Activated T-helper 1 cell treated with anti-CD3 and anti-CD28 coated beads, Interleukin-12 subunit alpha, Interleukin-12 subunit beta, Interleukin-2, Interleukin-4 antibody, amounts not matched to agents 30 ng/mL and 10 ng/mL and 1 ng/mL, durations not matched to agents 14 hours and 24 hours and 36 hours (primary cell): ENCODE measurements at regions of chr5 and their contacts with region 1.

Region 1: DNA sequence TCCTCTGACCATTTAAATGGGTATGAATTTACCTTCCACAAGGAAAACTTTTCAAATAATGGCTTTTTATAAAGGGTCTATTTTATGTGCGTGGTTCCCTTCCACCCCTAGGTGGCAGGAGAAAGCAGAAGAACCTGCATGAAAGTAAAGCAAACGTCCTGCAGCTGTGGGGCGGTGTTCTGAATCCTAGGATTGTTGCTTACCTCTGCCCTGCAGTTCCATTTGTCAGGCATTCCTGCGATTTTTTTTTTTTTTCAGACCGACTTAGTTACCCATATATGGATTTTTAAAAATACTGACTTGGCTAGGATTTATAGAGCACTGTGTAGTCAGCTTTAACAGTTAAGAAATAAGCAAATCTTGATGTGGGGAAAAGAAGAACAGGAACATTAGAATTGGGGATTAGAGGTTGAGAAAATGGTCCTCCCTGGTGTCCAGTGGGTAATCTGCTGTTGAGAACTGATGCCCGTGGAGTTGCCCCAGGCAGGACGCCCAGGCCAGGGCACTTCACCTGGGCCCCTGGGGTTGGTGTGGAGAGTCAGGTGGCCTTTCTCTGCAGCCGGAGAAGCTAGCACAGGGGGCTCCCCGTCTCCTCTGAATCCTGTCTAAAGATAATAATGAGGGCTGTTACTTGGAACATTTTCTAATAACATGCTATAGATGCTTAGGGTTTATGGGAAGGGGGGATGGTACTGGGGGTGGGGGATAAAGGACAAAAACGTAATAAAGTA is 30.4 kb upstream of the LTC4S start:
- DNase-seq: peak; percentile 11
- H3K4me3 Mint-ChIP-seq: no peak overlapping the region
- H3K27ac Mint-ChIP-seq: no peak overlapping the region
- H3K4me1 Mint-ChIP-seq: peaks cover 51% of the 10 kb centered on the region
- H3K27me3 Mint-ChIP-seq: no peaks in the 10 kb centered on the region

Region 2: GRCh38 chr5:179795863-179796833 is 32.8 kb after region 1 on chr5:
- intact Hi-C with region 1: loop called (anchors 1 kb)
- DNase-seq: peak; percentile 63
- H3K4me3 Mint-ChIP-seq: peak overlapping the region; percentile 67
- H3K27ac Mint-ChIP-seq: peak overlapping the region; percentile 40
- H3K4me1 Mint-ChIP-seq: peaks cover 8% of the 10 kb centered on the region
- H3K27me3 Mint-ChIP-seq: no peaks in the 10 kb centered on the region

Region 3: DNA sequence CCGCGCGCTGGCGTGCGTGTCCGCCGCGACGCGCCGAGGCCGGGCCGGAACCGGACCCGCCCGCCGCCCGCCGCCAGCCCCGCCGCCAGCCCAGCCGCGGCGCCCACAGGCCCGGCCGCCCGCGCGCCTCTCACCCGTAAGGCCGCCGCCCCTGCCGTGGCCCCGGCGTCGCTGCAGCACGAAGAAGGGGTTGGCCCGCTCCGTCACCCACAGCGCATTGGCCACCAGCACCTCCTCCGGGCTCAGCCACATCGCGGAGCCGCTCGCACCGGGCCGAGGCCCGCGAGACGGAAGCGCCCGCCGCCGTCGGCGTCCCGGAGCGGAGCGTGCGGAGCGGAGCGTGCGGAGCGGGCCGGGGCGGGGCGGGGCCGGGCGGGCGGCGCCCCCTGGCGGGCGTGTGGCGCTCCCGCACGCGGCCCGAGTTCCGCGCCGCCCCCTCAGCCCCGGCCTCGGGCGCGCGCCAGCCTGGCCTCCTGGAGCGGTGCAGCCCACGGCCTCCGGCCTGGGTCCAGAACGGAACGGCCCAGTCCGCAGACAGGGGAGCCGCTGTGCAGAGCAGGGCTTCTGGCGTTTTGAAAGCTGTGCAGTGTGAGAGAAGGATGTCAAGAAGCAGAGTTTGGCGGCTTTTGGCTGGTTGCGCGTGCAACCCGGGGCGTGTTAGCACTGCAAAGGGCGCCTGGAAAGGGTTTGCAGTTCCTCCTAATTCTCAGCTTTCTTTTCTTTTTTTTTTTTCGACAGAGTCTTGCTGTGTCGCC is 144.4 kb after region 1 on chr5 and contains the start of gene TBC1D9B:
- intact Hi-C with region 1: loop called (anchors 1 kb)
- DNase-seq: peak; percentile 69
- H3K4me3 Mint-ChIP-seq: peak within 1 kb of the TSS; percentile 95
- H3K27ac Mint-ChIP-seq: peak within 1 kb of the TSS; percentile 89
- H3K4me1 Mint-ChIP-seq: peaks cover 18% of the 10 kb centered on the region
- H3K27me3 Mint-ChIP-seq: peaks cover 2% of the 10 kb centered on the region
- total RNA-seq, gene TBC1D9B: 123 and 127 TPM in 2 replicates

Region 4: GRCh38 chr5:180090098-180090768 is 326.9 kb after region 1 on chr5:
- intact Hi-C with region 1: loop called (anchors 1 kb)
- DNase-seq: peak; percentile 61
- H3K4me3 Mint-ChIP-seq: peak overlapping the region; percentile 79
- H3K27ac Mint-ChIP-seq: no peak overlapping the region
- H3K4me1 Mint-ChIP-seq: peaks cover 4% of the 10 kb centered on the region
- H3K27me3 Mint-ChIP-seq: peaks cover 12% of the 10 kb centered on the region

Region 5: GRCh38 chr5:180143656-180144364 is 380.4 kb after region 1 on chr5:
- intact Hi-C with region 1: no loop called
- DNase-seq: no peak
- H3K4me3 Mint-ChIP-seq: no peak overlapping the region
- H3K27ac Mint-ChIP-seq: no peak overlapping the region
- H3K4me1 Mint-ChIP-seq: no peaks in the 10 kb centered on the region
- H3K27me3 Mint-ChIP-seq: peaks cover 2% of the 10 kb centered on the region